ENCODE measurements at regions of chr19 and their contacts with region 1.

Region 1: GRCh38 chr19:52028027-52028779 is at the start of gene ZNF614:
- DNase-seq: peak; percentile 93
- ATAC-seq: peak; percentile 98
- total RNA-seq, gene ZNF614: 6.0 TPM

Region 2: DNA sequence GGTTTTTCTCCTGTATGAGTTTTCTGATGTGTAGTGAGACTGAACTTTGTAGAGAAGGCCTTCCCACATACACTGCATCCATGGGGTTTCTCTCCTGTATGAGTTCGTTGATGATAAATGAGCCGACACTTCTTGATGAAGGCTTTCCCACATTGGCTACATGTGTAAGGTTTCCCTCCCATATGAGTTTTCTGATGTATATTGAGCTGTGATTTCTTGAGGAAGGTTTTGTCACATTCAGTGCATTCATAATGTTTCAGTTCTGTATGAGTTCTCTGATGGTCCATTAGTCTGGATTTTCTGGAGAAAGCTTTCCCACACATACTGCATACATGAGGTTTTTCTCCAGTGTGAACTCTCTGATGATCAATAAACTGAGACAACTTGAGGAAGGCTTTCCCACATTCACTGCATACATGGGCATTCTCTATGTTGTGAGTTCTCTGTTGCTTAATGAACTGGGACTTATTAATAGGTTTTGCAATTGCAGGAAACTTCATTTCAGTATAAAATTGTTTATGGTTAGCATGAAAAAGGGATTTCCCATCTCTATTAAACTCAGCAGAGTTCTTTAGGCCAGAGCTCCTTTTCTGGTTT is 34.1 kb before region 1 on chr19:
- intact Hi-C with region 1: no loop called
- DNase-seq: no peak
- ATAC-seq: no peak

Region 3: DNA sequence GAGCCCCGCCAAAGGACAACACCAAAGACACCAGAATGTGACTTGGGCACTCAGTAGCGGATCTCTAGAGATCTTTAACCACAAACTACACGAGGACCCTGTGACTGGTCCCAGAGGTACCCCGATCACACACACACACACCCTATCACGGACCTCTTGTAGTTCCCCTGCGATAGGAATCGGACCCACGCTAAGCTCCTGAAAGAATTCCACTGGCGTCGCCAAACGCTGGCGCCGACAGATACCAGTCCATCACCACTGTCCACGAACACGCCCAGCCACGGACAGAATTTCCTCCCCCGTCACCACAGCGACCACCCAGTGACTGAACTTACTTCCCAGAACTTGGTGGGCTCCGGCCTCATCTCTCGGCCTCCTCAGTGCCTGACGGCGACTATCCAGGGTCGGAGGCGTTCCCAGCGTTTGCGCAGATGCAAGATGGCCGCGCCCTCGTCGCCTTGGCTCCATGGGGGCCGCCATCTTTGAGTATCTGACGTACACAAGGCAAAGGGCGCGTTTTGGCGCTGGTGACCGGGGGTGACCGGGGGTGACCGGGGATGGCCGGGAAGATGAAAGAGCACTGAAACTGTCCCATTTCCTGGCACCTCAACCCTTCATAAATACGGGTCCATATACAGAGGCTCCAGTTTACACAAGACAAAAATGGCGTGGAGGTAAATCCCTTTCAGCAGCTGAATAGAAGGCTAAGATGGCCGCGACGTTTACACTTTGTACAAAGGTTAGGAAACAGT is 20.2 kb before region 1 on chr19 and contains the start of gene ZNF615:
- intact Hi-C with region 1: loop called (anchors 2 kb)
- DNase-seq: peak; percentile 96
- ATAC-seq: peak; percentile 99
- total RNA-seq, gene ZNF615: 11.9 TPM

Region 4: GRCh38 chr19:52115526-52116053 is 87.4 kb after region 1 on chr19:
- intact Hi-C with region 1: no loop called
- DNase-seq: no peak
- ATAC-seq: no peak

Region 5: GRCh38 chr19:52237771-52238400 is 209.7 kb after region 1 on chr19:
- intact Hi-C with region 1: loop called (anchors 10 kb)
- DNase-seq: no peak
- ATAC-seq: no peak

Measured in Right ventricle myocardium inferior (tissue), 1 donor.